ENCODE measurements at regions of chr12 and their contacts with region 1.

Region 1: GRCh38 chr12:51590347-51591019 is 550 bp upstream of the SCN8A start:
- DNase-seq: peak; percentile 76
- H3K4me3 Mint-ChIP-seq: peak overlapping the region; percentile 80
- H3K27ac Mint-ChIP-seq: no peak overlapping the region
- H3K4me1 Mint-ChIP-seq: peaks cover 12% of the 10 kb centered on the region
- H3K27me3 Mint-ChIP-seq: peaks cover 47% of the 10 kb centered on the region

Region 2: DNA sequence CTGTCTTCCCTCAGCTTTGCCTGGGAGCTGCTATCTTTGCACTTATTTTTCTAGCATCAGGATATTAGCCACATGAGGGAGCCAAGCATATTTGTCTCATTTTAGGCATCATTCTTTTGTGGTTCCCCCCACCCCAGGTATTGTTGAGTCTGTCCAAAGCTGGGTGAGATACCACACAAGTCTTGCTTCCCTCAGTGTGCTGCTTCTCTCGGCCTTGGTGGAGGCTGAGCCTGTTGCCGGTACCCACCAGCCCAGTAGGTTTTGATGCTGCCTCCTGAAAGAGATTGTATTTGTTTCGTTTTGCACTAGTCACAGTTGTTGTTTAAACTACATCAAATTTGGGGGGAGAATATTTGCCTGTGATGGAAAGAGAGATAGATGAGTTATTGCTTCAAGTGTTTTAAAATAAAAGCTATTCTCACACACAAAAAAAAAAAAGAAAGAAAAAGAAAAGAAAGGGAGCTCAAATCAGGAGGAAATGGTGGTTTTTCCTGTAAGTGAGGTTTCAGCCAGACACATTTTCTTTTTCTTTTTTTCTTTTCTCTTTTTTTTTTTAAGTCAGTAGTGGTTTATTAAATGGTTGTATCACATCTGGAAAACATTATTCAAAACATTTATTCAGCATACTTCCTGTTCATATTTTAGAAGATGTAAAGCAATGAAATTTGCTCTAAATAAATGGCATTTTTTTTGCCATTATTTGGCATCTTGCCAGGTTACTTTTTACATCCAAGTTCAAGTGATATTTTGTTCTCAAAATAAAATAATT is 107.4 kb before region 1 on chr12:
- CTCF ChIA-PET with region 1: no interaction called
- intact Hi-C with region 1: loop called (anchors 5 kb)
- DNase-seq: peak; percentile 50
- H3K4me3 Mint-ChIP-seq: peak overlapping the region; percentile 62
- H3K27ac Mint-ChIP-seq: peak overlapping the region; percentile 88
- H3K4me1 Mint-ChIP-seq: peaks cover 40% of the 10 kb centered on the region
- H3K27me3 Mint-ChIP-seq: no peaks in the 10 kb centered on the region

Region 3: DNA sequence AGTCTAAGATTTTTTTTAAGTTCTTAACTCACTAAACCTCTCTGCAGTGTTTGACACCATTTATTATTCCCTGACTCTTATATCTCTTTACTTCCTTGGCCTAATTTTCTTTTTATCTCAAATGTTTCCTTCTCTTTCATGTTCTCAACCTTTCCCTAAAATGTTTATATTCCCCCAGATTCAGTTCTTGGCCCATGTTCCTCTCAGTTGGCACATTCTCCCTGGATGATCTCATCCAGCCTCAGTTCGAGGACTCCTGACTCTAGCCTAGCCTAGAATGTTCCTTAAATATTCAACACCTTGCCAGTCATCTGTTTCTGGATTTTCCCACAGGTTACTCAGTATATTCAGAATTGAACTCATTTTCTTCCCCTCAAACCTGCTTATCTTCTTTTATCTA is 81.9 kb after region 1 on chr12:
- CTCF ChIA-PET with region 1: no interaction called
- intact Hi-C with region 1: no loop called
- DNase-seq: no peak
- H3K4me3 Mint-ChIP-seq: no peak overlapping the region
- H3K27ac Mint-ChIP-seq: no peak overlapping the region
- H3K4me1 Mint-ChIP-seq: peaks cover 8% of the 10 kb centered on the region
- H3K27me3 Mint-ChIP-seq: no peaks in the 10 kb centered on the region